Heart right ventricle (tissue), 16 donors: ENCODE measurements at regions of chr12 and their contacts with region 1.

Region 1: GRCh38 chr12:103947871-103948555 is 17.7 kb upstream of the TDG start:
- DNase-seq: no peak
- ATAC-seq: no peak
- H3K4me3 ChIP-seq: no peak overlapping the region
- H3K27ac ChIP-seq: no peak overlapping the region
- H3K4me1 ChIP-seq: no peaks in the 10 kb centered on the region
- H3K27me3 ChIP-seq: no peaks in the 10 kb centered on the region
- CTCF ChIP-seq: no peak

Region 2: GRCh38 chr12:103986829-103987228 is 38.8 kb after region 1 on chr12:
- intact Hi-C with region 1: loop called in 1 of 10 experiments (anchors 5 kb)
- DNase-seq: no peak
- ATAC-seq: no peak
- H3K4me3 ChIP-seq: no peak overlapping the region
- H3K27ac ChIP-seq: no peak overlapping the region
- H3K4me1 ChIP-seq: no peaks in the 10 kb centered on the region
- H3K27me3 ChIP-seq: no peaks in the 10 kb centered on the region
- CTCF ChIP-seq: no peak

Region 3: GRCh38 chr12:104049278-104049902 is 101.4 kb after region 1 on chr12:
- intact Hi-C with region 1: no loop called
- DNase-seq: no peak
- ATAC-seq: peak in 4 of 8 donors; percentile 3 to 28 (median 11)
- H3K4me3 ChIP-seq: peak overlapping the region in 9 of 10 donors; percentile 17 to 60 (median 51)
- H3K27ac ChIP-seq: peak overlapping the region in 9 of 10 donors; percentile 35 to 73 (median 61)
- H3K4me1 ChIP-seq: peaks cover 0 to 50% (median 24%) of the 10 kb centered on the region in 9 donors
- H3K27me3 ChIP-seq: peaks cover 0 to 27% (median 0%) of the 10 kb centered on the region in 7 donors
- CTCF ChIP-seq: no peak

Region 4: GRCh38 chr12:104090687-104091086 is 142.7 kb after region 1 on chr12:
- intact Hi-C with region 1: loop called in 2 of 10 experiments (anchors 10 kb)
- DNase-seq: no peak
- ATAC-seq: no peak
- H3K4me3 ChIP-seq: no peak overlapping the region
- H3K27ac ChIP-seq: no peak overlapping the region
- H3K4me1 ChIP-seq: no peaks in the 10 kb centered on the region
- H3K27me3 ChIP-seq: no peaks in the 10 kb centered on the region
- CTCF ChIP-seq: no peak